Heart right ventricle (tissue), 16 donors: ENCODE measurements at regions of chr12 and their contacts with region 1.

Region 1: GRCh38 chr12:100554608-100555077 is 18.8 kb upstream of the GAS2L3 start:
- DNase-seq: peak in 1 of 2 donors; percentile 73
- ATAC-seq: peak in 7 of 8 donors; percentile 72 to 91 (median 80)
- H3K4me3 ChIP-seq: no peak overlapping the region
- H3K27ac ChIP-seq: peak overlapping the region in 3 of 10 donors; percentile 11 to 45 (median 25)
- H3K4me1 ChIP-seq: peaks cover 0 to 16% (median 6%) of the 10 kb centered on the region in 9 donors
- H3K27me3 ChIP-seq: no peaks in the 10 kb centered on the region
- CTCF ChIP-seq: peak; percentile 70 to 93 (median 82)

Region 2: DNA sequence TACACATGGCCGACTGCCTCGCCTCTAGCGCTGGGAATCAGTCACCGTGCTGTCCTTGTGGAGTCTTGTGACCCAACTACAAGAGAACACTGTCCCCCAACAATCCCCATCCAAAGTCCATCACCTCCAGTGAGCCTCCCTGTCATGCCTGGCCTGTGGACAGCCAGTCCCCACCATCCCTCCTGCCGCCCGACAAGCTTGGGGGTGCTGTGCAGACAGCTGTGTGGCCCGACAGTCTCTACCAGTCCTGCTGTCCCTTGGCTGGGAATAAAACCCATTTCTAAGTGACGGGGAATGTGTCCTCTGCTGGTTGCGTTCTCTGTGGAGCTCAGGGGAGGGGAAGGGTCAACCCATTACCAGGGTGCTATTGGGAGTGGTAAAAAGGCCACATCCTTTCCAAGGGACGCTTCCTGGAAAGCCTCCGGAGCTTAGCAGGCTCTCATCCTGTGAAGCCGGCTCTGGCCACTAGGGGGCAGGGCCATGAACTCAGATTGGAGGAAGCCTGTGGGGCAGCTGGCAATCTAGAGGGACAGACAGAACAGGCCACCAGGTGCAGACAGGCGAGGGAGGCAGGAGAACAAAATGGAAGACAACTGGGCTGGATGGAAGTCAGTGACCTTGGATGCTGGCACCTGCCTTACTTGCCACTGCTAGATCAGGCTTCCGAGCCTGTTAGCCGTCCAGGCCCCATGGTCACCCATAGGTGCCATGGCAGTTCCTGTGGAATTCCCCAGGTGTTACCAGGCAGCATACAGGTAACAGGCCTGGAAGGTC is 400.0 kb before region 1 on chr12:
- intact Hi-C with region 1: loop called in 1 of 10 experiments (anchors 10 kb)
- DNase-seq: peak; percentile 69 to 77
- ATAC-seq: peak in 6 of 8 donors; percentile 56 to 78 (median 68)
- H3K4me3 ChIP-seq: no peak overlapping the region
- H3K27ac ChIP-seq: no peak overlapping the region
- H3K4me1 ChIP-seq: no peaks in the 10 kb centered on the region
- H3K27me3 ChIP-seq: no peaks in the 10 kb centered on the region
- CTCF ChIP-seq: peak; percentile 56 to 89 (median 78)

Region 3: DNA sequence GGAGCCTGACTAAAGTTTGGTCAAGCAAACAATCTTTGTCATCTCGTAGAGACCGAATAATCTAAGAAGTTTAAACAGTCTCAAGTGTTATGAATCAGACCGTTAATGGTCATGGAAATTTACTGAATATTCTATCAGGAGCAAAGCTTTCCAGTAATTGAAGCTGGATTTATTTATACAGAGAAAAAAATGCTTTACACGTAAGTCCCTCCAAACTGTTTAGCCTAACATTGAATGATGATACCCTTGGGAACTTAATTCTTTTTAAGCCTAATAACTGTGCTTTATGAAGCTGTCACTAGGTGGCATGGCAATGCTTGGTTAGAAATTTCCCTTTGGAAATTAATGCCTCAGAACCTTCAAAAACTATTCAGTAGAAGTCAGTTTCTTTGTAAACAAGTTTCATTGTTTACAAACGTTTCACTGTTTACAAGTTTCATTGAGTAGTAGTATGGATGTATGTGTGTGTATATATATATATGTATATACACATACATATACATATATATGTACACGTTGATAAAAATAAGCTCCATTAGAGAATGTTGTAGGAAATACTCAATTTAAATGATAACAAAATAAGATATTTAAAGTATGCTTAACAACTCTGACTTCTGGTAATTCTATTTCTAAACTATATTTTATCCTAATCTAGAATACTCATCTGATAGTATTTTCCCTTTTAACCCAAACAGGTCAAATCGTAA is 319.9 kb before region 1 on chr12:
- intact Hi-C with region 1: loop called in 9 of 10 experiments (anchors 5 to 10 kb)
- DNase-seq: no peak
- ATAC-seq: peak in 7 of 8 donors; percentile 13 to 79 (median 63)
- H3K4me3 ChIP-seq: no peak overlapping the region
- H3K27ac ChIP-seq: peak overlapping the region in 4 of 10 donors; percentile 17 to 36 (median 28)
- H3K4me1 ChIP-seq: no peaks in the 10 kb centered on the region
- H3K27me3 ChIP-seq: no peaks in the 10 kb centered on the region
- CTCF ChIP-seq: peak; percentile 61 to 90 (median 81)

Region 4: DNA sequence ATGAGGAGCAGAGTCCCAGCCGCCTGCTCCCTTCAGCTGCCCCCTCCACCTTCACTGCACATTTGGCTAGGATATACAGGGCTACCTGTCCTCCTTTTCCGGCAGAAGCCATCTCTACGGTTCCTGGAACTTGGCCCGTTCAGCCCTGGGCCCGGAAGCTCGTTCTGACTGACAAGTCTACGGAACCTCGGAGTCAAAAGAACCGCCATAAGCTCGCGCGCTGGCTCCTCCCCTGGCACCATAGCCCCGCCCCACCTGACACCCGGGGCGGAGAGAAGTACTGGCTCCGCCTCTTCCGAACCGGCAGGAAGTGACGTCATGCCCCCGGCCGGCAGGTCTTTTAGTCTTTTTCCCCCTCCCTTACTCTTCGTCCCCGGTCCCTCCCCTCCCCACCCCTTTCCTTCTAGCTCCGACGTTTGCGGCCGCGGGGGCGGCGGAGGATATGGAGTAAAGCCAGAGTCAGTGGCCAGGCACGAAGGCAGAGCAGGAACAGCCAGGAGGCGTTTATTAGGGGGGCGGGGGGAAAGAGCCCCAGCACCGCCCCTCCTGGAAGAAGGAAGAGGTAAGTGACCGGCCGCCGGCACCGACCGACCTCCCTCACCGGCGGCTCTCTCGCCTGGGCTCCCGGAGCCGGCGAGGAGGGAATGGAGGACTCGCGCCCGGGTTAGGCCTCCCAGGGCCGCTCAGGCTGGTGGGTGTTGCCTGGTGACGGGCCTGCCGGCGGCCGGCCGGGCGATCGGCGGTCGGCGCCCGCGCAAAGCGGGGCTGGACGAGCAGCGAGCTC is 287.6 kb before region 1 on chr12 and contains the starts of genes DEPDC4 and SCYL2:
- intact Hi-C with region 1: loop called in 1 of 10 experiments (anchors 10 kb)
- DNase-seq: peak; percentile 94 to 95
- ATAC-seq: peak; percentile 96 to 99 (median 98)
- H3K4me3 ChIP-seq: peak within 1 kb of the TSS; percentile 69 to 97 (median 88)
- H3K27ac ChIP-seq: peak within 1 kb of the TSS; percentile 75 to 99 (median 96)
- H3K4me1 ChIP-seq: peaks cover 2 to 48% (median 36%) of the 10 kb centered on the region in 9 donors
- H3K27me3 ChIP-seq: no peaks in the 10 kb centered on the region
- CTCF ChIP-seq: peak in 3 of 9 donors; percentile 22 to 39 (median 38)
- total RNA-seq, gene DEPDC4: 0.47 to 2.0 (median 0.72) TPM
- total RNA-seq, gene SCYL2: 25.8 to 40.0 (median 32.9) TPM

Region 5: GRCh38 chr12:100348657-100349454 is 205.8 kb before region 1 on chr12:
- intact Hi-C with region 1: loop called (anchors 1 to 10 kb)
- DNase-seq: no peak
- ATAC-seq: peak in 2 of 8 donors; percentile 42 to 50
- H3K4me3 ChIP-seq: no peak overlapping the region
- H3K27ac ChIP-seq: no peak overlapping the region
- H3K4me1 ChIP-seq: no peaks in the 10 kb centered on the region
- H3K27me3 ChIP-seq: peaks cover 0 to 4% (median 0%) of the 10 kb centered on the region in 7 donors
- CTCF ChIP-seq: peak in 7 of 9 donors; percentile 21 to 63 (median 50)

Region 6: DNA sequence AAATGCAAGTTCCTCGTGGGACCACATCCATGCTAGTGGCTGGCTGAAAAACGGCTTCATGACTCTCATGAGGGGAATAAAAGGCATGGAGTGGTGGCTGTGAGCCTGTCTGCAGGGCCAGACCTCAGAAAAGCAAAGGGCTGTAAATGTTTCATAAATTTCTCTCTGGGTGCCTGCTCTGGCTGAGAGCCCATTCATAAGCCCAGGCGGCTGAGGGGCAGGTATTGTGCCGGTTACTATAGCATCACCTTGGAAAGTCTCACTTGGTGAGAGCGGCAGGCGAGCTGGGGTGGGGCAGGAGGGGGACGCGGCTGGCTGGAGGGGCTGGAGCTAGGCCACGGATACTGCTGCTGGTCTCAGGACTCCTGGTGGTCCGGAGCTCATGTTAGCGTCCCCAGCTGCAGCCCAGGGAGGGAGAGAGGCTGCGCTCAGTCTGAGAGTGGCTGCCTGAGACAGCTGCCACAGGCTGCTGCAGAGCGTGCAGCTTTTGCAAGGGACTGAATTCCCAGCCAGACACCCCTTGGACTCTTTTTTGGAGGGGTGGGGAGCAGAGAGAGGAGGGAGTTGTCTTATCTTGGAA is 197.9 kb before region 1 on chr12 and contains the start of gene SLC17A8:
- intact Hi-C with region 1: loop called in 3 of 10 experiments (anchors 5 to 10 kb)
- DNase-seq: no peak
- ATAC-seq: no peak
- H3K4me3 ChIP-seq: no peak within 1 kb of the TSS
- H3K27ac ChIP-seq: no peak within 1 kb of the TSS
- H3K4me1 ChIP-seq: peaks cover 0 to 25% (median 6%) of the 10 kb centered on the region in 9 donors
- H3K27me3 ChIP-seq: peaks cover 0 to 19% (median 15%) of the 10 kb centered on the region in 7 donors
- CTCF ChIP-seq: no peak
- total RNA-seq, gene SLC17A8: 0.08 to 0.17 TPM in 2 of 10 donors, not detected in the others

Region 7: DNA sequence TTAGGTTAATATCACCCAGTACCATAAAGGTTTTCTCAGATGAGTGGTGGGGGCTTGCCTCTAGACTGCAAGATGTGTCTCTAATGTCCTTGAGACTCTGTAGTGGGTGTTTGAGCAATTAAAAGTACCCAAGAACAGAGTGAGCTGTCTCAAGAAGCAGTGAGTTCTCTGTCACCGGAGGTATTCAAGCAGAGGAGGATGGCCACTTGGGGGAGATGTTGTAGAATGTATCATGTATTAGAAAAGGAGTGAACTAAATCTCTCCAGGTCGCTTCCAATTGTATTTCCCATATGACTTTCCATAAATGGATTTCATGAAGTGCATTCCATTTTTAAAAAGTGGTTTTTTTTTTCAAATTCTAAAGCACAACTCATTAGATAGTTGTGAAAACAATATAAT is 162.8 kb before region 1 on chr12:
- intact Hi-C with region 1: loop called in 1 of 10 experiments (anchors 5 kb)
- DNase-seq: no peak
- ATAC-seq: no peak
- H3K4me3 ChIP-seq: no peak overlapping the region
- H3K27ac ChIP-seq: no peak overlapping the region
- H3K4me1 ChIP-seq: no peaks in the 10 kb centered on the region
- H3K27me3 ChIP-seq: no peaks in the 10 kb centered on the region
- CTCF ChIP-seq: peak in 6 of 9 donors; percentile 14 to 44 (median 26)